CD8-positive, alpha-beta T cell (primary cell): ENCODE measurements at regions of chr19 and their contacts with region 1.

Region 1: DNA sequence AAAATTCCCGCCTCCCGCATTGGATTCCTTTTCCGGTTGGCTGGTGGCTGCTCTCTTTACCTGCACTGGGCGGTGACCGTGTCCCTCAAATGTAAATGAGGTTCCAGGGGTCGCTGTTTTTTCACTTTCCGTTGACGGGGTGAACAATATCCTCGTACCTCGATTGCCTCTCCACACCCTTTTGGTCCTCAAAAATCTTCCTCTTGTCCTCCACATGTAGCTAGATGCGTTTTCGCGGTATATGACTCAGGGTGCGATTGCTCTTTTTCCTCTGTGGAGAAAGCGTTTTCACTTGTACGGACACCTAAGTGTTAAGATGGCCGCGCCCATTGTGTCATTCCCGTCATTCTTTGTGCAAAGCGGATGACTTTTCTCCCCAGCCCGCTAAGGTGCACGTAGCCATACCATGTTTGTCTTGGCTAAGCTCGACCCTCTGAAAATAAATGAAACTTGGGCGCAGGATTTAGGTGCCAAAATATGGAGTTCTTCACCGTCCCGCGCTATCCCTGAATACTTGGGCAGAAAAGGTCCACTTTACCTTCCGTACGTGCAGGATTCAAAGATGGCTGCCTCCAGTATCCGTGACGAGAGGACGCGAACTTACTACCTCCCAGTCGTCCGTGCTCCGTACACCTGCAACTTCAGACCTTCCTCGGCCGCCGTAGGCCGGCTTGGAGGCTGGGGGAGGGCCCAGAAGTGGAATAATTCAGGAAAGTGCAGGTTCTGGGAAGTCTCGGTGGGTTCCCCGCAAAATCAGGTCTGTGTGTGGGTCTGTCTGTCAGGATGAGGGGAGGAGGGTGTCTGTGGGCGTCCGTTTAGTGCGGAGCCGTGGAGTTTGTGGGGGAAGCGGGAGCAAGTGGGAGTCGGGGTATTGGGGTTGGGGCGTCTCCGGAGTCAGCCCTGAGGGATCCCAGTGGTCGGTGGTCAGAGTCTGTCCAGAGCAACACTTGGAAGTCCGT is at the start of gene ZNF613:
- DNase-seq: peak; percentile 63 to 92 (median 85)
- ATAC-seq: peak; percentile 86
- H3K4me3 ChIP-seq: peak within 1 kb of the TSS; percentile 88 to 95
- H3K4me3 Mint-ChIP-seq: peak within 1 kb of the TSS; percentile 95
- H3K27ac ChIP-seq: peak within 1 kb of the TSS; percentile 55 to 65
- H3K27ac Mint-ChIP-seq: peak within 1 kb of the TSS; percentile 91
- H3K4me1 ChIP-seq: peaks cover 7% of the 10 kb centered on the region
- H3K4me1 Mint-ChIP-seq: peaks cover 23% of the 10 kb centered on the region
- H3K27me3 ChIP-seq: no peaks in the 10 kb centered on the region
- H3K27me3 Mint-ChIP-seq: no peaks in the 10 kb centered on the region
- CTCF ChIP-seq: no peak
- total RNA-seq, gene ZNF613: 0.58 to 1.1 TPM

Region 2: DNA sequence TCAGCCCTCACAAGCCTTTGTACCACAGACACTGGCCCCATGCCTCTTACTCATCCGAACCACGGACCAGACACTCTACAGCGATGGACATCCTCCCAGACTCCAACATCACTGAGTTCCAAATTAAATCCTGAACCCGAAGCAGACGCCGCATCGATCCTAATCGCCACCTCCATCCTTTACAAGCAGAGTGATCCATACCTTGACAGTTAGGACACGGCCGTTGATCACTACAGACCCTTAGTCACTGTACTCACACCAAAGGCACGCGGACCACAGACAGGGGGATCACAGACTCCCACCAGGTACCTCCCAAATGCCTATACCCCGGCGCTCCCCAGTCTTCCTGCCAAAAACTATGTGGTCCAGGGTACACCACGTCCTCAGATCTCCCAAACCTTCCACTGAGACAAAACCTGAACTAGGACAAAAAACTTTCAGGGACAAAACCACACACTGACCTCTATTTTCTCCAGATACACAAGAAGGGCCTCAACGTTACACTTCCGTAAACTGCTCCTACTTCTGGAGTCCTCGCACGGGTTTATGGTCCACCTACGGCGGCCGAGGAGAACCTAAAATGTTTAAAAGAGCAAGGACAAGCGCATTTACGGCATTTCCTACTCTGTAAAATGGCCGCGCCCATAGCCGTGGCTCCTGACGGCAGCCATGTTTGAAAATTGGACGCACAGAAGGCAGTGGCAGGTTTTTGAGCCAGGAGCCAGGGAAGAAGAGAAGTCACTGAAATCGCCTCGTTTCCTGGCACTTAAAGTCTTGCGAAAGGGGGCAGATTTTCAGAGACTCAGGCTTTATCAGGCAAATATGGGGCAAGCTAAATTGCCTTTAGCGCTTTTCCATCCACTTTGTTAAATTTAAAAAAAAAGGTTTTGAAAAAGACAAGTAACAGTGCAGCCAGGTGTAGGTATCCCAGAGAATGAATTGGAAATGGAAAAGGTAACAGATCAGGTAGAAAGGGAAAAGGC is 59.5 kb after region 1 on chr19 and contains the start of gene ZNF350:
- CTCF ChIA-PET with region 1: no interaction called
- POLR2A ChIA-PET with region 1: interaction called, 3 read pairs
- intact Hi-C with region 1: loop called (anchors 1 kb)
- DNase-seq: peak; percentile 74 to 96 (median 88)
- ATAC-seq: peak; percentile 99
- H3K4me3 ChIP-seq: peak within 1 kb of the TSS; percentile 85 to 92
- H3K4me3 Mint-ChIP-seq: peak within 1 kb of the TSS; percentile 96
- H3K27ac ChIP-seq: peak within 1 kb of the TSS; percentile 71 to 77
- H3K27ac Mint-ChIP-seq: peak within 1 kb of the TSS; percentile 95
- H3K4me1 ChIP-seq: peaks cover 5% of the 10 kb centered on the region
- H3K4me1 Mint-ChIP-seq: peaks cover 21% of the 10 kb centered on the region
- H3K27me3 ChIP-seq: no peaks in the 10 kb centered on the region
- H3K27me3 Mint-ChIP-seq: no peaks in the 10 kb centered on the region
- CTCF ChIP-seq: no peak
- total RNA-seq, gene ZNF350: 48.1 to 50.8 TPM

Region 3: DNA sequence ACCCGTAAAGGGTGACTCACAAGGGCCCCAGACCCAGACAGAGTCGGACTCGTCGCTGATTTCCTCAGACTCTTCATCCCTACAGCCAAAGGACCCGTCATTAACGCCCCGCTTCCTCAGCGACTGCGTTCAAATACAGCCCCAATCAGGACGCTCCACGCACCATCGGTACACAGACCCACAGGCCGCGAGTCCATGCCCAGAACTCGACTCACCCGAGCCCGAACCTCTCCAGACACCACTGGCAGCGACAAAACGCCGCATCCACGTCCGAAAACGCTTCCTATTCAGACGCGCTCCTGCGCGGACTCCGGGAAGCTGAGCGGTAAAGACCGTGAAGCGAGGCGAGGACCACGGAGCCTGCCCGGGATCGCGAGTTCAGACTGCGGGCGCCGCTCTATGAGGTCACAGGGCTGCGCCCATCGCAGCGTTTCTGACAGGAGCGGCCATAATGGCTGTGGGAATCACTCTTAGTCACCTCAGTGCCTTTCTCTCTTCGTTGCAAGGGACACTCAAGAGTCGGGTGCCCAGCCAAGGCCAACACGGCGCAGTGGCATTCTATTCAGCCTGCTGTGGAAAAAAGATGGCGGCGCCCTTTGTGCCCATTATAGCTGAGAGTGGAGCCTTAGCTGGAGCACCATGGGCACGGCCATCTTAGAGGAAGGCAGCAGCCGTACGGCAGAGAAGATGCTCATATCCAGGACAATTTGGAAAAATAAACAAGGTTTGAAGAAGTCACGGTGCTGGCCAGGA is 101.1 kb after region 1 on chr19 and contains the start of gene ZNF614:
- CTCF ChIA-PET with region 1: no interaction called
- POLR2A ChIA-PET with region 1: no interaction called
- intact Hi-C with region 1: loop called (anchors 1 kb)
- DNase-seq: peak; percentile 74 to 92 (median 85)
- ATAC-seq: peak; percentile 86
- H3K4me3 ChIP-seq: peak within 1 kb of the TSS; percentile 92 to 93
- H3K4me3 Mint-ChIP-seq: peak within 1 kb of the TSS; percentile 98
- H3K27ac ChIP-seq: peak within 1 kb of the TSS; percentile 93 to 94
- H3K27ac Mint-ChIP-seq: peak within 1 kb of the TSS; percentile 99
- H3K4me1 ChIP-seq: peaks cover 10% of the 10 kb centered on the region
- H3K4me1 Mint-ChIP-seq: peaks cover 30% of the 10 kb centered on the region
- H3K27me3 ChIP-seq: no peaks in the 10 kb centered on the region
- H3K27me3 Mint-ChIP-seq: no peaks in the 10 kb centered on the region
- CTCF ChIP-seq: no peak
- total RNA-seq, gene ZNF614: 10.6 to 11.4 TPM